Upper lobe of right lung (tissue), 1 donor: ENCODE measurements at regions of chr5 and their contacts with region 1.

Region 1: DNA sequence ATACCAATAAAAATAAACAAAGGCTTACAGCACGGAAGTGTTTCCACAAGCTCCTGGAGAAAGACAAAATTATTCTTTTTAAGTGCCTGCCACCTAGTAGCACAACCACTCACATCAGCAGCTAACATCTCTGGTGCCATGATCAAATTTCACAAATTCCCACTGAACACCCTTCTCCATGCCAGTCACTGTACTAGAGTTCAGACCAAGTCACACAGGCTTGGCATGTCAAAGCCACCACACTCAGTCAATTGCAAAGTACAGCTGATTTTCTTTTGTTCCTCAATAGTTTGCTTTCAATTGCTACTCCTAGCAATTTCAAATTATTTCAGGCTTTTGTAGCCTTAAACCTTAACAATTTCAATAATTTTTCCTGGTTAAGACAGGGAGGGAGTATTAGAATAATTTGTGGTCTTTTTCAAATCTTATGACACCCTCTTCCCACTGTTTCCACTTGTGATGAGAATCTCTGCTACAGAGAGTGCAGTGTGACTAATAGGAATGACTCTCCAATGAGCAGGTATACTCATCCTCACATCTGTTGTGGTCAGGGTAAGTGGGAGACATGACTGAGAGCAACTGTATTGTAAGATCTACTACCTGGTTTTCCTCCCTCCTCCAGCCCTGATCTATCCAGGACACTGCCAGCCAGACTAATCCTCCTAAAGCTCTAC is 46.2 kb downstream of the RNF145 start:
- DNase-seq: no peak
- ATAC-seq: peak; percentile 65
- H3K4me3 ChIP-seq: no peak overlapping the region
- H3K27ac ChIP-seq: no peak overlapping the region
- H3K4me1 ChIP-seq: no peaks in the 10 kb centered on the region
- H3K27me3 ChIP-seq: no peaks in the 10 kb centered on the region
- CTCF ChIP-seq: no peak

Region 2: GRCh38 chr5:159262859-159263567 is 99.8 kb after region 1 on chr5 and contains the start of gene UBLCP1:
- intact Hi-C with region 1: loop called (anchors 10 kb)
- DNase-seq: peak; percentile 90
- ATAC-seq: peak; percentile 96
- H3K4me3 ChIP-seq: peak within 1 kb of the TSS; percentile 93
- H3K27ac ChIP-seq: peak within 1 kb of the TSS; percentile 95
- H3K4me1 ChIP-seq: peaks cover 18% of the 10 kb centered on the region
- H3K27me3 ChIP-seq: no peaks in the 10 kb centered on the region
- CTCF ChIP-seq: no peak
- total RNA-seq, gene UBLCP1: 25.0 TPM

Region 3: GRCh38 chr5:159324102-159324760 is 161.1 kb after region 1 on chr5:
- intact Hi-C with region 1: no loop called
- DNase-seq: no peak
- ATAC-seq: no peak
- H3K4me3 ChIP-seq: no peak overlapping the region
- H3K27ac ChIP-seq: no peak overlapping the region
- H3K4me1 ChIP-seq: no peaks in the 10 kb centered on the region
- H3K27me3 ChIP-seq: peaks cover 5% of the 10 kb centered on the region
- CTCF ChIP-seq: no peak